Heart right ventricle (tissue), 16 donors: ENCODE measurements at regions of chr6 and their contacts with region 1.

Region 1: DNA sequence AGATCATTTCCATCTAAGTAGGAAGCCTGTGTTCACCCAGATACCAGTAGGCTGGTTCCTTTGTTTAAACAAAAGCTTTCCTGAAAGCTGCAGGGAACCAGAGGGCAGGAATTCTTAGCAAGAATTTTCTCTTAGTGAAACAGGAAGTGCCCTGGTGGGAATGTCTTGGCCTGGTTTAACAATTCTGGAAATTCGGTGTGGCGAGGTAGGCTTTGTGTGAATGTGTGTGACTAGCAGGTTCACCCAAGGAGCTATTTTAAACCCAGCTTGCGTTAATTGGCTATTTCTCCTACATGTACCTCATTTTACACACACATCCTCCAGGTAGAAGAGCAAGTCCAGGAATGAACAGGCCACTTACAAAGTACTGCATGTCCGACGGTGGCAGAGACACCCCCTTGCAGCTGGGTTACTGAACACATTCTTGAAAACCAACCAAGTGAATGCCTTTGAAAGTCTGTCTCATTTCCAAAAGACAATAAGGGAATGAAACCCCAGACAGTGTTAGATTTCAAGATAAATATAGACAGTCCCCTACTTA is 64.6 kb downstream of the GFOD1 start:
- DNase-seq: no peak
- ATAC-seq: peak in 3 of 8 donors; percentile 13 to 57 (median 46)
- H3K4me3 ChIP-seq: no peak overlapping the region
- H3K27ac ChIP-seq: peak overlapping the region; percentile 44 to 84 (median 74)
- H3K4me1 ChIP-seq: peaks cover 41 to 100% (median 99%) of the 10 kb centered on the region in 9 donors
- H3K27me3 ChIP-seq: no peaks in the 10 kb centered on the region
- CTCF ChIP-seq: no peak

Region 2: DNA sequence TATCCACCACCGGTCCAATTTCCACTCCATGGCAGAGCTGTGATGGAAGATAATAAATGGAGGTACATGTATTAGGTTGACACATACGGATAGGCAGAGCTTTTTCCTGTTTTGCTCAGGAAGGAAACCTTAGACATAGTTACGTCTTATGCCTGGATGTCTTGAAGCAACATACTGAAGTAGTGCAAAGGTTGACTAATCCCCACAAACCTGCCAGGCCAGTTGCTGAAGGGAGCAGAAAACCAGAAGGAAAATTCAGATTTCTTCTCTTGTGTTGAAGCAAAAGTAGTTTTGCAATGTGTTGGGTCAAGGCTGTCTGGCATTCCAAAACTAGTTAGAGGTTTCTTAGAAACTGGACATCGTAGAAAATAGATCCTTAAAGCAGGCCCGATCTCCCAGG is 637.5 kb before region 1 on chr6:
- intact Hi-C with region 1: no loop called
- DNase-seq: no peak
- ATAC-seq: no peak
- H3K4me3 ChIP-seq: no peak overlapping the region
- H3K27ac ChIP-seq: no peak overlapping the region
- H3K4me1 ChIP-seq: no peaks in the 10 kb centered on the region
- H3K27me3 ChIP-seq: peaks cover 0 to 8% (median 0%) of the 10 kb centered on the region in 7 donors
- CTCF ChIP-seq: no peak

Region 3: GRCh38 chr6:13006578-13007300 is 416.0 kb before region 1 on chr6:
- intact Hi-C with region 1: no loop called
- DNase-seq: no peak
- ATAC-seq: peak in 7 of 8 donors; percentile 34 to 95 (median 91)
- H3K4me3 ChIP-seq: no peak overlapping the region
- H3K27ac ChIP-seq: peak overlapping the region; percentile 17 to 81 (median 54)
- H3K4me1 ChIP-seq: peaks cover 0 to 39% (median 21%) of the 10 kb centered on the region in 9 donors
- H3K27me3 ChIP-seq: no peaks in the 10 kb centered on the region
- CTCF ChIP-seq: no peak

Region 4: GRCh38 chr6:13407709-13408695 is 14.7 kb before region 1 on chr6:
- intact Hi-C with region 1: loop called in 1 of 10 experiments (anchors 2 kb)
- DNase-seq: peak in 1 of 2 donors; percentile 48
- ATAC-seq: peak in 7 of 8 donors; percentile 8 to 63 (median 35)
- H3K4me3 ChIP-seq: no peak overlapping the region
- H3K27ac ChIP-seq: peak overlapping the region; percentile 54 to 89 (median 82)
- H3K4me1 ChIP-seq: peaks cover 36 to 96% (median 91%) of the 10 kb centered on the region in 9 donors
- H3K27me3 ChIP-seq: no peaks in the 10 kb centered on the region
- CTCF ChIP-seq: no peak

Region 5: DNA sequence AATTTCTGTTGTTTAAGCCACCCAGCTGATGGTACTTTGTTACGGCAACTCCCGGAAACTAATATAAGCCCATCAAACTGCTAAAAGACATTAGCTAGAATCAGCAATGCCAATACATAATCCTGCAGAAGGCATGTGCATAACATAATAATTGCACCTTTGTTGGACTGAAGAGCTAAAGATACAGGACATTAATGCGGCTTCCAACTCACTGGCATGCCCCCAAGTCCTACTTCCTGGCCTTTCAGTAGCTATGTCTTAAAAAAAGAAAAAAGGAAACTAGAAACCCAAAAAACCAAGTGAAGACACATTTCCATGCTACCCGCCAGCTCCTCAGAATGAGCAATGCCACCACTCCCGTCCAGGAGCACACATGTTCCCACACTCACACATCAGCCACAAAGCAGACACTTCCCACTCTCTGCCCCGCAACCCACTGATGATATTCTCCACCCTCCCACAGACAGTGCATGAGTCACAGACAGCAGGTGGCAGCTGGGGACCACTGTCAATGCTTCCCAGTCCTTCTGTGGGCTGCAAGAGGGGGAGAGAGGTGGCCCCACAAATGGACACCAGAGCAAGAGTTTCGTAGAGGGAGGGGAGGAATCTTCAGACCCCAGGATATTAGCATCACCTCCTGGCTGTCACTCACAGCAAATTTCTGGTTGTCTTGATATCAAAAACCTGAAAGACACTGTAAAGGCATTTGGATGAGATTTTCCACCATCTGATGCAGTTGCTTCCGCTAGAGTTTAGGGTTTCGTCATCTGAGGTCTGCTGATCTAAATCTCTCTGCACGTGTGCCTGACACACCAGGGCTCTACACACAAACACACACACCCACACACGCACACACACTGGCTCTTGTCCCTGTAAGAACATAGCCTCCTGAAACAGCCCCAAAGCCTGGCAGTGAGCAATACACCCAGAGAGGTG is 31.8 kb after region 1 on chr6:
- intact Hi-C with region 1: loop called in 1 of 10 experiments (anchors 5 kb)
- DNase-seq: peak in 1 of 2 donors; percentile 58
- ATAC-seq: peak; percentile 57 to 80 (median 74)
- H3K4me3 ChIP-seq: peak overlapping the region in 1 of 10 donors; percentile 7
- H3K27ac ChIP-seq: peak overlapping the region; percentile 23 to 73 (median 48)
- H3K4me1 ChIP-seq: peaks cover 21 to 92% (median 67%) of the 10 kb centered on the region in 9 donors
- H3K27me3 ChIP-seq: no peaks in the 10 kb centered on the region
- CTCF ChIP-seq: peak in 6 of 9 donors; percentile 15 to 56 (median 40)